Heart left ventricle (tissue), 16 donors: ENCODE measurements at regions of chr1 and their contacts with region 1.

Region 1: GRCh38 chr1:198088360-198089071 is 68.3 kb upstream of the NEK7 start:
- DNase-seq: no peak
- ATAC-seq: peak in 3 of 4 donors; percentile 13 to 67 (median 56)
- H3K4me3 ChIP-seq: peak overlapping the region in 1 of 12 donors; percentile 11
- H3K27ac ChIP-seq: no peak overlapping the region
- H3K4me1 ChIP-seq: peaks cover 0 to 8% (median 0%) of the 10 kb centered on the region in 12 donors
- H3K27me3 ChIP-seq: no peaks in the 10 kb centered on the region
- CTCF ChIP-seq: peak; percentile 17 to 72 (median 67)
- POLR2A ChIP-seq: no peak

Region 2: GRCh38 chr1:197937892-197938291 is 150.6 kb before region 1 on chr1:
- intact Hi-C with region 1: no loop called
- DNase-seq: no peak
- ATAC-seq: no peak
- H3K4me3 ChIP-seq: no peak overlapping the region
- H3K27ac ChIP-seq: no peak overlapping the region
- H3K4me1 ChIP-seq: no peaks in the 10 kb centered on the region
- H3K27me3 ChIP-seq: peaks cover 0 to 50% (median 6%) of the 10 kb centered on the region in 9 donors
- CTCF ChIP-seq: no peak
- POLR2A ChIP-seq: no peak

Region 3: DNA sequence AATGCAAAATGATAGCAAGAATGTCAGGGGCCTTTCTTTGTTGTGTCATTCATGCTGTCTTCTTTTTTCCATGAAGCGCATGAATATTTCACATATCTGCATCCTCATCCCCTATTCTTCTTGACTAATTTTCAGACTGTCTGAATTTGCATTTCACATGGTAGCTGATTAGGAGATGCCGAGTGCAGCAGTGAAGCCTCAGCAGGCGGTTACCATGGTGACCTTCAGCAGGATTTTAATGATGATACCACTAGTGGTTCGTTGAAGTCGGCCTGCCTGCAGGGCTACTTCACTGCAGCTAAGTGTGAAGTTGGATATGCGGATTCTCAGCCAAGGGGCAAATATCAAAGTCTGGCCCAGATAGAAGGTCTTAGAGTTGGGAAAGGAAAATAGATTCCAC is 210.1 kb after region 1 on chr1:
- intact Hi-C with region 1: loop called in 1 of 10 experiments (anchors 10 kb)
- DNase-seq: no peak
- ATAC-seq: no peak
- H3K4me3 ChIP-seq: no peak overlapping the region
- H3K27ac ChIP-seq: no peak overlapping the region
- H3K4me1 ChIP-seq: peaks cover 0 to 12% (median 0%) of the 10 kb centered on the region in 12 donors
- H3K27me3 ChIP-seq: no peaks in the 10 kb centered on the region
- CTCF ChIP-seq: no peak
- POLR2A ChIP-seq: no peak

Region 4: DNA sequence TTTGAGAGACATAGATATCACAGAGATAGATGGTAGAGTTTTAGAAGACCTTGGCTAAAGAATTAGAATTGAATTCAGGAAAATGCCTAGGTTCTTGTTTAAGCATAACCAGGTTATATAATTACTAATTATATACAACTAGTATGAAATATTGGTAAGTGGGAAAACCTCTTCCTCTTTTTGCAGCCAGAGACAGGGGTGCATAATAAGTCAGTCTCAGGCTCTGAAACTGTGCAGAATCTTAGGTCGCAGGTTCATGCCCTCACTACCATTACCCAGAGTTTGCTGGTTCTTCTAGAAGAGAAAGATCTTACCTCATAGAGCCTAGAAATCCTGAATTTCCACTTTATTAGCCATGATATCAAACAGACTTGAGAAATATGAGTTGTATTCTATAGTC is 251.6 kb after region 1 on chr1:
- intact Hi-C with region 1: no loop called
- DNase-seq: no peak
- ATAC-seq: no peak
- H3K4me3 ChIP-seq: no peak overlapping the region
- H3K27ac ChIP-seq: no peak overlapping the region
- H3K4me1 ChIP-seq: no peaks in the 10 kb centered on the region
- H3K27me3 ChIP-seq: no peaks in the 10 kb centered on the region
- CTCF ChIP-seq: no peak
- POLR2A ChIP-seq: no peak

Region 5: GRCh38 chr1:198359024-198359653 is 270.6 kb after region 1 on chr1:
- intact Hi-C with region 1: loop called in 9 of 10 experiments (anchors 1 to 10 kb)
- DNase-seq: no peak
- ATAC-seq: no peak
- H3K4me3 ChIP-seq: no peak overlapping the region
- H3K27ac ChIP-seq: no peak overlapping the region
- H3K4me1 ChIP-seq: no peaks in the 10 kb centered on the region
- H3K27me3 ChIP-seq: no peaks in the 10 kb centered on the region
- CTCF ChIP-seq: peak; percentile 27 to 61 (median 44)
- POLR2A ChIP-seq: no peak

Region 6: GRCh38 chr1:198620951-198621824 is 532.7 kb after region 1 on chr1:
- intact Hi-C with region 1: no loop called
- DNase-seq: peak in 1 of 5 donors; percentile 34
- ATAC-seq: peak in 2 of 4 donors; percentile 69 to 72
- H3K4me3 ChIP-seq: peak overlapping the region in 1 of 12 donors; percentile 17
- H3K27ac ChIP-seq: peak overlapping the region in 2 of 12 donors; percentile 34 to 86
- H3K4me1 ChIP-seq: peaks cover 0 to 36% (median 0%) of the 10 kb centered on the region in 12 donors
- H3K27me3 ChIP-seq: no peaks in the 10 kb centered on the region
- CTCF ChIP-seq: no peak
- POLR2A ChIP-seq: no peak